Left lung (tissue), 14 donors: ENCODE measurements at regions of chr15 and their contacts with region 1.

Region 1: GRCh38 chr15:100500226-100500990 is 28.3 kb downstream of the CERS3 start:
- DNase-seq: peak in 2 of 4 donors; percentile 82 to 85
- ATAC-seq: no peak
- H3K4me3 ChIP-seq: no peak overlapping the region
- H3K27ac ChIP-seq: no peak overlapping the region
- H3K4me1 ChIP-seq: no peaks in the 10 kb centered on the region
- H3K27me3 ChIP-seq: no peaks in the 10 kb centered on the region
- CTCF ChIP-seq: no peak

Region 2: DNA sequence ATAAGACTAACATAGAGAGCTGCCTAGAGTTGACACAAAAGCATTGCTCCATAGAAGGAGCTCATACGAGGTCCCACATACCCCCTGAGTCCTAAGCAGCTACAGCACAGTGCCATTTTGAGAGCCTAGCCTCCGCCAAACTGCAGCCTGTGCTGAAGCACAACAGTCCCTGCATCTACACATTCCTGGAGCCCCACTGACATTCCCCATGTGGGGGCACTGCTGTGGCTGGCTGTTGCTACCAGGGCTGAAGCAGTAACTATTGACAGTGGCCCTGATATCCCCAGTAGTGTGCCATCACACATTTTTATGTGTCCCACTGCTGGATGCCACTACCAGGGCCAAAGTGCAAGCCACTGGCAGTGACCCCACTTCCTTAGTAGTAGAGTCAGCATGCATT is 51.9 kb before region 1 on chr15:
- intact Hi-C with region 1: loop called in 1 of 2 experiments (anchors 10 kb)
- DNase-seq: no peak
- ATAC-seq: no peak
- H3K4me3 ChIP-seq: no peak overlapping the region
- H3K27ac ChIP-seq: no peak overlapping the region
- H3K4me1 ChIP-seq: no peaks in the 10 kb centered on the region
- H3K27me3 ChIP-seq: no peaks in the 10 kb centered on the region
- CTCF ChIP-seq: no peak